ENCODE measurements at regions of chr7 and their contacts with region 1.

Region 1: DNA sequence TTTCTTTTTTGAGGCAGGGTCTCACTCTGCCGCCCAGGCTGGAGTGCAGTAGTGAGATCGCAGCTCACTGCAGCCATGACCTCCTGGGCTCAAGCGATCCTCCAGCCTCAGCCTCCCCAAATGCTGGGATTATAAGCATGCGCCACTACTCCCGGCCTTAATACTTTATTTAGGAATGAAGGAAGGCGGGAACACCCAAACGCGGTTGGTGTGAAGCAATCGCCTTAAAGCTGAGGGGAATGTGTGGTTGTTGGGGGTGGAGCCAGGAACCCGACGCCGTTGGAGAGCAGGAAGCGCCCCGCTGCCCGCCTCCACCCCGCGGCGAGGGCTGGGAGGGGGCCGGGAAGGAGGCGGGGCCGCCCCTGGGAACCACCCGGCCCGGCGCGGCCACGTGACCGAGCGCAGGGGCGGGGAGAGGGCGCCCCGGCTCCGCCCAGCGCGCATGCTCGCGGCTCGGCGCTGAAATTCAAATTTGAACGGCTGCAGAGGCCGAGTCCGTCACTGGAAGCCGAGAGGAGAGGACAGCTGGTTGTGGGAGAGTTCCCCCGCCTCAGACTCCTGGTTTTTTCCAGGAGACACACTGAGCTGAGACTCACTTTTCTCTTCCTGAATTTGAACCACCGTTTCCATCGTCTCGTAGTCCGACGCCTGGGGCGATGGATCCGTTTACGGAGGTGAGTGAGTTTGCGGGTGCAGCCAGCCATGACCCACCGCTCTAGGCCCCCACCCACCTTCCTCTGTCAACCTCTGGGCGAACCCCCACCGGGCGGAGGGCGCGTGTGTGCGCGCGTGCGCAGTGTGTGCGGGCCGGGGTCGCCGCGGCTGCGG is at the start of gene ANLN:
- DNase-seq: peak; percentile 85
- H3K4me3 Mint-ChIP-seq: peak within 1 kb of the TSS; percentile 87
- H3K27ac Mint-ChIP-seq: peak within 1 kb of the TSS; percentile 86
- H3K4me1 Mint-ChIP-seq: peaks cover 21% of the 10 kb centered on the region
- H3K27me3 Mint-ChIP-seq: peaks cover 10% of the 10 kb centered on the region
- total RNA-seq, gene ANLN: 62.4 to 64.8 TPM

Region 2: GRCh38 chr7:35694781-35695472 is 694.7 kb before region 1 on chr7 and contains the start of gene HERPUD2:
- CTCF ChIA-PET with region 1: no interaction called
- intact Hi-C with region 1: loop called (anchors 1 kb)
- DNase-seq: peak; percentile 92
- H3K4me3 Mint-ChIP-seq: peak within 1 kb of the TSS; percentile 94
- H3K27ac Mint-ChIP-seq: peak within 1 kb of the TSS; percentile 96
- H3K4me1 Mint-ChIP-seq: peaks cover 35% of the 10 kb centered on the region
- H3K27me3 Mint-ChIP-seq: no peaks in the 10 kb centered on the region
- total RNA-seq, gene HERPUD2: 20.3 to 22.4 TPM

Region 3: GRCh38 chr7:36152756-36153570 is 236.6 kb before region 1 on chr7 and contains the start of gene EEPD1:
- CTCF ChIA-PET with region 1: no interaction called
- intact Hi-C with region 1: loop called (anchors 1 kb)
- DNase-seq: peak; percentile 100
- H3K4me3 Mint-ChIP-seq: peak within 1 kb of the TSS; percentile 72
- H3K27ac Mint-ChIP-seq: no peak within 1 kb of the TSS
- H3K4me1 Mint-ChIP-seq: peaks cover 18% of the 10 kb centered on the region
- H3K27me3 Mint-ChIP-seq: no peaks in the 10 kb centered on the region
- total RNA-seq, gene EEPD1: 0.49 to 0.50 TPM

Region 4: GRCh38 chr7:36677769-36678437 is 288.3 kb after region 1 on chr7:
- CTCF ChIA-PET with region 1: no interaction called
- intact Hi-C with region 1: loop called (anchors 5 kb)
- DNase-seq: peak; percentile 79
- H3K4me3 Mint-ChIP-seq: peak overlapping the region; percentile 31
- H3K27ac Mint-ChIP-seq: peak overlapping the region; percentile 57
- H3K4me1 Mint-ChIP-seq: peaks cover 38% of the 10 kb centered on the region
- H3K27me3 Mint-ChIP-seq: peaks cover 2% of the 10 kb centered on the region

Region 5: GRCh38 chr7:37031571-37032257 is 642.1 kb after region 1 on chr7:
- CTCF ChIA-PET with region 1: no interaction called
- intact Hi-C with region 1: loop called (anchors 2 kb)
- DNase-seq: peak; percentile 79
- H3K4me3 Mint-ChIP-seq: no peak overlapping the region
- H3K27ac Mint-ChIP-seq: peak overlapping the region; percentile 50
- H3K4me1 Mint-ChIP-seq: peaks cover 60% of the 10 kb centered on the region
- H3K27me3 Mint-ChIP-seq: no peaks in the 10 kb centered on the region